ENCODE measurements at regions of chr17 and their contacts with region 1.

Region 1: DNA sequence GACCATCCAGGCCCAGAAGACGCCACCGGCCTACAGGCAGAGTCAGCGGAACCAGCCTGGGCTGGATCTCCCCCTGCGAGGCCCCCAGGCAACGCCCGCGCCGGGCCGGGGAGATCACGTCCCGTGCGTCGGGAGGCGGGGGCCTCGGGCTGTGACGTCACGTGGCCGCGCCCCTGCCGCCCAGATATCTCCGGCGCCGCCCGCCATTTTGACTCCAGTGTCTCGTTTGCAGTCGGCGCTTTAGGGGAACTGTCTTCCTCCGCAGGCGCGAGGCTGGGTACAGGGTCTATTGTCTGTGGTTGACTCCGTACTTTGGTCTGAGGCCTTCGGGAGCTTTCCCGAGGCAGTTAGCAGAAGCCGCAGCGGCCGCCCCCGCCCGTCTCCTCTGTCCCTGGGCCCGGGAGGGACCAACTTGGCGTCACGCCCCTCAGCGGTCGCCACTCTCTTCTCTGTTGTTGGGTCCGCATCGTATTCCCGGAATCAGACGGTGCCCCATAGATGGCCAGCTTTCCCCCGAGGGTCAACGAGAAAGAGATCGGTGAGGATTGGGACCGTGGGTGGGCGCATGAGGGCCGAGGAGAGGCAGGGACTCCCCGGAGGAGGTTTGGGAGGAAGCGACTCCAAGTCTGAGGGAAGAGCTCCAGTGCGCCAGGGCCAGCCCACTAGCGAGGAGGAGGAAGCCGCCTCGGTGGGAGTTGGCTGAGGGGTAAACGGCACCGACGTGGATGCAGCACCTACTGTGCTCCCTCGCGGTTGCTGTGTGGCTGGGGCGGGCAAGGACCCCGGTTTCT is at the start of gene WSB1:
- DNase-seq: peak; percentile 86

Region 2: DNA sequence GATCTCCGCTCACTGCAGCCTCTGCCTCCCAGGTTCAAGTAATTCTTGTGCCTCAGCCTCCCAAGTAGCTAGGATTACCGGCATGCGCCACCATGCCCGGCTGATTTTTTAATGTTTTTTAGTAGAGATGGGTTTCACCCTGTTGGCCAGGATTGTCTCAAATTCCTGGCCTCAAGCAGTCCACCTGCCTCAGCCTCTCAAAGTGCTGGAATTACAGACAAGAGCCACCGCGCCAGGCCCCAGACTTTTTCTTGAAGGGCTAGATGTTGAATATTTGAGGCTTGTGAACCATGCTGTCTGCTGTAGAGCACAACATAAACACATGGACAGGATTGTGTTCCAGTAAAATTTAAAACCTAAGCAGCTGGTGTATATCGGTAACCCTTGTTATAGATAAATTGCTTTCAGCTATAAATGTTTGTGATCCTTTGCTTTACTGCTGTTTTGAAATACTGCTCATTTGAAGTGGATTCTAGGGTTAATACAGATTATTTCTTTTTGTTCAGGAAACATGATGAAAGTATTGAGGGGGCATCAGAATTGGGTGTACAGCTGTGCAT is 12.3 kb after region 1 on chr17:
- CTCF ChIA-PET with region 1: no interaction called
- POLR2A ChIA-PET with region 1: interaction called, 21 read pairs
- DNase-seq: no peak

Region 3: GRCh38 chr17:27319536-27320221 is 25.6 kb after region 1 on chr17:
- CTCF ChIA-PET with region 1: no interaction called
- POLR2A ChIA-PET with region 1: interaction called, 14 read pairs
- DNase-seq: no peak